ENCODE measurements at regions of chr1 and their contacts with region 1.

Region 1: GRCh38 chr1:226649780-226650179 is 89.3 kb downstream of the ITPKB start:
- DNase-seq: no peak
- ATAC-seq: no peak
- H3K4me3 ChIP-seq: no peak overlapping the region
- H3K27ac ChIP-seq: no peak overlapping the region
- H3K4me1 ChIP-seq: peaks cover 22% of the 10 kb centered on the region
- H3K27me3 ChIP-seq: no peaks in the 10 kb centered on the region
- CTCF ChIP-seq: peak; percentile 16 to 38 (median 36); a peak in 3 of 6 replicates
- EP300 ChIP-seq: no peak
- POLR2A ChIP-seq: no peak
- RAD21 ChIP-seq: peak; percentile 56

Region 2: GRCh38 chr1:226634166-226634588 is 15.6 kb before region 1 on chr1:
- CTCF ChIA-PET with region 1: interaction called, 4 read pairs
- POLR2A ChIA-PET with region 1: no interaction called
- RAD21 ChIA-PET with region 1: interaction called, 26 read pairs
- SMC1A ChIA-PET with region 1: interaction called, 14 read pairs
- in situ Hi-C with region 1: no loop called
- intact Hi-C with region 1: no loop called
- DNase-seq: no peak
- ATAC-seq: peak; percentile 97
- H3K4me3 ChIP-seq: no peak overlapping the region
- H3K27ac ChIP-seq: no peak overlapping the region
- H3K4me1 ChIP-seq: peaks cover 21% of the 10 kb centered on the region
- H3K27me3 ChIP-seq: no peaks in the 10 kb centered on the region
- CTCF ChIP-seq: peak; percentile 85 to 96 (median 95)
- EP300 ChIP-seq: no peak
- POLR2A ChIP-seq: no peak
- RAD21 ChIP-seq: peak; percentile 94

Region 3: DNA sequence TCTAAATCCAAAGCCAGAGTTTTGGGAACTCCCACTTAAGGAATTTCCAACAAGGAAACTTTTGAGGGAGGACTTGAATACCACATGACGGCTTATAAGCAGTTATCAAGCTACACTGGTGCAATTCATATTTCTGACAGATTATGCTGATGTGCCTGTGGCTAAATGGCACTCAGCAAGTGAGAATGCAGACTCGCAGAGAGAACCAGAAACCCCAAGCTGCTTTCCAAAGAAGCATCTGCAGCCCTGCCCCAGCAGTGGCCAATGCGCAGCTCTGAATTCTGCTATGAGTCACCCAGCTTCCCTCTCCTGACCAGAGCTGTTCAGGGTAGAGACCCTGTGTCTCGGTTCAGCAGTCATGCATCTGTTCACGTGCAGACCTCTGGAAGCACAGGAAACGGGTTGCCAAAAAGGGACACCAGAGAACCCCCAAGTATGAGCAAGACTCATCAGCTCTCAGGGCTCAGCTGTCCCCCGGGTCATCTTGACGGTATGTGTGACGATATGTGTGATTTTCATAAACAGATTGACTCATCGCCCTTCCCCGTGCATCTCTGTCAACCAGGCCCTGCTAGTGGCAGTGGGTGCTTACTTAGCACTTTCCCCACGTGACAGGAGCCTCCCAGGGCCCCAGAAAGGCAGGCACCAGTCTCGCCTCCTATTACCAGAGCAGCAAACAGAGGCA is 13.0 kb after region 1 on chr1:
- CTCF ChIA-PET with region 1: interaction called, 12 read pairs
- POLR2A ChIA-PET with region 1: interaction called, 14 read pairs
- RAD21 ChIA-PET with region 1: interaction called, 26 read pairs
- SMC1A ChIA-PET with region 1: interaction called, 34 read pairs
- in situ Hi-C with region 1: no loop called
- intact Hi-C with region 1: loop called (anchors 1 kb)
- DNase-seq: peak; percentile 99
- ATAC-seq: peak; percentile 95
- H3K4me3 ChIP-seq: peak overlapping the region; percentile 5; the same call in 1 of the 2 replicates
- H3K27ac ChIP-seq: peak overlapping the region; percentile 48
- H3K4me1 ChIP-seq: peaks cover 57% of the 10 kb centered on the region
- H3K27me3 ChIP-seq: no peaks in the 10 kb centered on the region
- CTCF ChIP-seq: no peak
- EP300 ChIP-seq: peak; percentile 98
- POLR2A ChIP-seq: no peak
- RAD21 ChIP-seq: peak; percentile 14; the same call in 1 of the 2 replicates

Region 4: GRCh38 chr1:226702957-226703831 is 53.4 kb after region 1 on chr1:
- CTCF ChIA-PET with region 1: interaction called, 5 read pairs
- POLR2A ChIA-PET with region 1: interaction called, 4 read pairs
- RAD21 ChIA-PET with region 1: interaction called, 6 read pairs
- SMC1A ChIA-PET with region 1: no interaction called
- in situ Hi-C with region 1: no loop called
- intact Hi-C with region 1: loop called (anchors 2 kb)
- DNase-seq: no peak
- ATAC-seq: peak; percentile 92
- H3K4me3 ChIP-seq: peak overlapping the region; percentile 54
- H3K27ac ChIP-seq: peak overlapping the region; percentile 92
- H3K4me1 ChIP-seq: peaks cover 12% of the 10 kb centered on the region
- H3K27me3 ChIP-seq: no peaks in the 10 kb centered on the region
- CTCF ChIP-seq: no peak
- EP300 ChIP-seq: peak in 1 of 2 experiments; percentile 41; a peak in 1 of 4 replicates
- POLR2A ChIP-seq: peak; percentile 93
- RAD21 ChIP-seq: no peak